CD8-positive, alpha-beta T cell (primary cell): ENCODE measurements at regions of chr11 and their contacts with region 1.

Region 1: GRCh38 chr11:6481012-6481923 is at the starts of genes ARFIP2 and TIMM10B:
- DNase-seq: peak; percentile 92 to 99 (median 96)
- ATAC-seq: peak; percentile 95
- H3K4me3 ChIP-seq: peak within 1 kb of the TSS; percentile 76 to 87
- H3K4me3 Mint-ChIP-seq: peak within 1 kb of the TSS; percentile 96
- H3K27ac ChIP-seq: peak within 1 kb of the TSS; percentile 87 to 98
- H3K27ac Mint-ChIP-seq: peak within 1 kb of the TSS; percentile 99
- H3K4me1 ChIP-seq: peaks cover 32% of the 10 kb centered on the region
- H3K4me1 Mint-ChIP-seq: peaks cover 40% of the 10 kb centered on the region
- H3K27me3 ChIP-seq: no peaks in the 10 kb centered on the region
- H3K27me3 Mint-ChIP-seq: no peaks in the 10 kb centered on the region
- CTCF ChIP-seq: no peak
- total RNA-seq, gene ARFIP2: 76.5 to 89.7 TPM
- total RNA-seq, gene TIMM10B: 68.6 to 73.0 TPM

Region 2: DNA sequence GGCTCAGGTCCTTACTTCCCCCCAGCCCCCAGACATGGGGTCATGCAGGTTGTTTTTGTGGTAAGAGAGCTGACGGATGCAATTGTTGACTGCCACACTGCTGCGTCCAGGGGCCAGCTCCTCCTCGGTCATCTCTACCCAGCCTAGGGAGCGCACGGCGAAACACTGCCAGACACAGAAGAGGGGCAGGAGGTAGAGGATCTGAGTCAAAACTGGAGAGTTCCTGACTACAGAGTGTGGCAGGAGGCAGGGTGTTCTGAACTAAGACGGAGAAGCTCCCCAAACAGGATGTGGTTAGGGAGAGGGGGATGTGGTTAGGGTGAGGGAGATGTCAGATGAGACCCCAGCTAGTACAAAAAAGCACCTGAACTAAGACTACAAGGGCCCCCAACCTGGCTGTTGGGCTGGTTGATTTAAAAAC is 78.7 kb before region 1 on chr11:
- CTCF ChIA-PET with region 1: interaction called, 4 read pairs
- POLR2A ChIA-PET with region 1: interaction called, 12 read pairs
- intact Hi-C with region 1: no loop called
- DNase-seq: peak; percentile 46 to 95 (median 77)
- ATAC-seq: peak; percentile 76
- H3K4me3 ChIP-seq: peak overlapping the region; percentile 25 to 53
- H3K4me3 Mint-ChIP-seq: peak overlapping the region; percentile 77
- H3K27ac ChIP-seq: peak overlapping the region; percentile 77 to 84
- H3K27ac Mint-ChIP-seq: peak overlapping the region; percentile 94
- H3K4me1 ChIP-seq: peaks cover 95% of the 10 kb centered on the region
- H3K4me1 Mint-ChIP-seq: peaks cover 96% of the 10 kb centered on the region
- H3K27me3 ChIP-seq: no peaks in the 10 kb centered on the region
- H3K27me3 Mint-ChIP-seq: no peaks in the 10 kb centered on the region
- CTCF ChIP-seq: no peak

Region 3: GRCh38 chr11:6497069-6497839 is 16.0 kb after region 1 on chr11 and contains the start of gene DNHD1:
- CTCF ChIA-PET with region 1: interaction called, 6 read pairs
- POLR2A ChIA-PET with region 1: interaction called, 18 read pairs
- intact Hi-C with region 1: no loop called
- DNase-seq: no peak
- ATAC-seq: no peak
- H3K4me3 ChIP-seq: no peak within 1 kb of the TSS
- H3K4me3 Mint-ChIP-seq: no peak within 1 kb of the TSS
- H3K27ac ChIP-seq: no peak within 1 kb of the TSS
- H3K27ac Mint-ChIP-seq: no peak within 1 kb of the TSS
- H3K4me1 ChIP-seq: no peaks in the 10 kb centered on the region
- H3K4me1 Mint-ChIP-seq: peaks cover 11% of the 10 kb centered on the region
- H3K27me3 ChIP-seq: no peaks in the 10 kb centered on the region
- H3K27me3 Mint-ChIP-seq: no peaks in the 10 kb centered on the region
- CTCF ChIP-seq: no peak
- total RNA-seq, gene DNHD1: 34.6 to 41.1 TPM

Region 4: GRCh38 chr11:6603287-6604080 is 122.2 kb after region 1 on chr11 and contains the starts of genes ILK and RRP8:
- CTCF ChIA-PET with region 1: interaction called, 3 read pairs
- POLR2A ChIA-PET with region 1: interaction called, 3 read pairs
- intact Hi-C with region 1: loop called (anchors 2 kb)
- DNase-seq: peak; percentile 66 to 92 (median 87)
- ATAC-seq: peak; percentile 78
- H3K4me3 ChIP-seq: peak within 1 kb of the TSS; percentile 93 to 97
- H3K4me3 Mint-ChIP-seq: no peak within 1 kb of the TSS
- H3K27ac ChIP-seq: peak within 1 kb of the TSS; percentile 65 to 88
- H3K27ac Mint-ChIP-seq: no peak within 1 kb of the TSS
- H3K4me1 ChIP-seq: peaks cover 60% of the 10 kb centered on the region
- H3K4me1 Mint-ChIP-seq: peaks cover 40% of the 10 kb centered on the region
- H3K27me3 ChIP-seq: no peaks in the 10 kb centered on the region
- H3K27me3 Mint-ChIP-seq: no peaks in the 10 kb centered on the region
- CTCF ChIP-seq: no peak
- total RNA-seq, gene ILK: 26.6 to 31.6 TPM
- total RNA-seq, gene RRP8: 29.1 to 31.3 TPM

Region 5: DNA sequence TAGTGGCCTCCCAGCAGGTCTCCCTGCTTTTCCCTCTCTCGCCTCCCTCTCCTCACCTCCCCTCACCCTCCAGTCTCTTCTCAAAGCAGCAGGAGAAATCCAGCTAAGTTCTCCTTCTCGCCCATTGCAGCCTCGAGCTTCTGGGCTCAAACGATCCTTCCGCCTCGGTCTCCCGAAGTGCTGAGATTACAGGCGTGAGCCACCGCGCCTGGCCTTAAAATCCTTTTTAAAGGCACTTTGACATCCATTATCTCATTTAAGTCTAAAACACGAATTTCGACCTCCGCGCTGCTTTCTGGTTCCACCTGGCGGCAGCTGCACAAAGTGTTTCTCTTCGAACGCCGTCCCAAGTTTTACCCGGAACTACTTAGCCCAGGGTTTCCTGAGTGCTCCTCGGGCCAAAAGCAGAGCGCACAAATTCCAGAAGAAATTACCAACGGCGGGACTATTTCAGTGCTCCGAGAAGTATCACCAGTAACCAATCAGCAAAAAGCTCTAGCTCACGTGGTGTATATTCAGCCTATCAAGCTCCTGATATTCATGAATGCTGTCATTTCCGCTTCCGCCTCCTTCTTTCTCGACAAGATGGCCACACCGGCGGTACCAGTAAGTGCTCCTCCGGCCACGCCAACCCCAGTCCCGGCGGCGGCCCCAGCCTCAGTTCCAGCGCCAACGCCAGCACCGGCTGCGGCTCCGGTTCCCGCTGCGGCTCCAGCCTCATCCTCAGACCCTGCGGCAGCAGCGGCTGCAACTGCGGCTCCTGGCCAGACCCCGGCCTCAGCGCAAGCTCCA is 1505.7 kb after region 1 on chr11 and contains the start of gene EIF3F:
- CTCF ChIA-PET with region 1: interaction called, 3 read pairs
- POLR2A ChIA-PET with region 1: no interaction called
- intact Hi-C with region 1: loop called in 1 of 2 experiments (anchors 5 kb)
- DNase-seq: peak; percentile 79 to 99 (median 88)
- ATAC-seq: peak; percentile 96
- H3K4me3 ChIP-seq: peak within 1 kb of the TSS; percentile 68 to 71
- H3K4me3 Mint-ChIP-seq: peak within 1 kb of the TSS; percentile 95
- H3K27ac ChIP-seq: peak within 1 kb of the TSS; percentile 57 to 84
- H3K27ac Mint-ChIP-seq: peak within 1 kb of the TSS; percentile 97
- H3K4me1 ChIP-seq: peaks cover 32% of the 10 kb centered on the region
- H3K4me1 Mint-ChIP-seq: peaks cover 50% of the 10 kb centered on the region
- H3K27me3 ChIP-seq: no peaks in the 10 kb centered on the region
- H3K27me3 Mint-ChIP-seq: no peaks in the 10 kb centered on the region
- CTCF ChIP-seq: peak; percentile 88
- total RNA-seq, gene EIF3F: 359 to 366 TPM